ENCODE measurements at regions of chr1 and their contacts with region 1.

Region 1: GRCh38 chr1:89578151-89578550 is 53.5 kb downstream of the LRRC8B start:
- H3K4me3 Mint-ChIP-seq: no peak overlapping the region
- H3K27ac Mint-ChIP-seq: no peak overlapping the region
- H3K4me1 Mint-ChIP-seq: peaks cover 12% of the 10 kb centered on the region
- H3K27me3 Mint-ChIP-seq: no peaks in the 10 kb centered on the region

Region 2: GRCh38 chr1:89483010-89483756 is 95.0 kb before region 1 on chr1:
- intact Hi-C with region 1: no loop called
- H3K4me3 Mint-ChIP-seq: no peak overlapping the region
- H3K27ac Mint-ChIP-seq: no peak overlapping the region
- H3K4me1 Mint-ChIP-seq: peaks cover under 1% of the 10 kb centered on the region
- H3K27me3 Mint-ChIP-seq: no peaks in the 10 kb centered on the region

Region 3: GRCh38 chr1:89540406-89540970 is 37.7 kb before region 1 on chr1:
- intact Hi-C with region 1: loop called (anchors 5 kb)
- H3K4me3 Mint-ChIP-seq: no peak overlapping the region
- H3K27ac Mint-ChIP-seq: peak overlapping the region; percentile 74
- H3K4me1 Mint-ChIP-seq: peaks cover 49% of the 10 kb centered on the region
- H3K27me3 Mint-ChIP-seq: no peaks in the 10 kb centered on the region

Region 4: GRCh38 chr1:90474731-90475130 is 896.6 kb after region 1 on chr1:
- intact Hi-C with region 1: no loop called
- H3K4me3 Mint-ChIP-seq: no peak overlapping the region
- H3K27ac Mint-ChIP-seq: no peak overlapping the region
- H3K4me1 Mint-ChIP-seq: no peaks in the 10 kb centered on the region
- H3K27me3 Mint-ChIP-seq: no peaks in the 10 kb centered on the region

Measured in dendritic cell treated with granulocyte-macrophage colony-stimulating factor and Interleukin-4, amounts not matched to agents 40 ng/mL and 50 ng/mL, for 4 days (primary cell).